Activated CD4-positive, alpha-beta T cell treated with anti-CD3 and anti-CD28 coated beads, Interleukin-2, amount 10 ng/mL, durations not matched to agents 24 days and 14 days (primary cell): ENCODE measurements at regions of chr11 and their contacts with region 1.

Region 1: DNA sequence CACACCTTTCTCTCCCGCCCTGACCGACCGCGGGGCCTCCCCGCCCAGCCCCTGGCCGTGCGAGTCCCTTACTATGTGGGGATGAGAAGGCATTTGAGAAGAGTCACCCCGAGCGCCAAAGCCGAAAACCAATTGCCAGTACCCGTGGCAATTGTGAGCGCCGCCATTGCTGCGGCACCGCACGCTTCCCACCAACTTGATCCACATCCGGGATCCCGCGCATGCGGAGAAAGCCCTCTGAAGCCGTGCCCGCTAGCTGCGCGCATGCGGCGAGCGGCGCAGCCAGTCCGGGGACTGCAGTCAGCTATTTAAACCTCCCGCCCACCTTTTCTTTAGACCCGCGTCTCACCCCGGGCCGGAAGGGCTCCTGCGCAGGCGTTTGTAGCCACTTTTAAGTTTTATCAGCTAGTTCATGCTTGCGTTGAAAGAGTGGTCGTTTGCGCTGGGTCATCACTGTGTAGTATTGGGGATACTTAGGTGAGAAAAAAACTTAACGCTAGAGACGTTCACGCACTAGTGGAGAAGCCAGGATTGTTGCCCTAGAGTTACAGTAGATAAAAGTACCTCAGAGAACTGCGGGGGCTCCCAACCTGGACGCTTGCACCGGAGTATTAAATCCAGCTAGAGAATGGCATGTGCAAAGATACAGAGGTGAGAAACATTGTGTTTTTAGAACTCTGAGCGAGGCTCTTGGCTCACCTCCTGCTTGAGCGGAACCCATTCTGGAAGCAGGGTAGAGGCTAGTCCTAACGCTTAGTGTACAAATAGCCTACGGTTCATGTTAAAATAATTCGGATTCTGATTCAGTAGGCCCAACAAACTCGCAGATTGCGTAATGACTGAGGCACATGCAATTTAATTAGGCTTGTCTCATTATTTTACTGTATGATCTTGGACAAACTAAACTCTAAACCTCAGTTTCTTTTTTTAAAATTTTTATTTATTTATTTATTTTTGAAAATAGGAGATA is at the start of gene ALG8:
- DNase-seq: peak; percentile 99
- H3K4me3 Mint-ChIP-seq: peak within 1 kb of the TSS; percentile 86
- H3K27ac Mint-ChIP-seq: peak within 1 kb of the TSS; percentile 95
- H3K4me1 Mint-ChIP-seq: peaks cover 43% of the 10 kb centered on the region
- H3K27me3 Mint-ChIP-seq: no peaks in the 10 kb centered on the region
- total RNA-seq, gene ALG8: 60.9 and 61.7 TPM in 2 replicates

Region 2: GRCh38 chr11:77820563-77821348 is 319.0 kb before region 1 on chr11 and contains the starts of genes AAMDC and RSF1:
- intact Hi-C with region 1: loop called (anchors 1 kb)
- DNase-seq: peak; percentile 98
- H3K4me3 Mint-ChIP-seq: peak within 1 kb of the TSS; percentile 98
- H3K27ac Mint-ChIP-seq: peak within 1 kb of the TSS; percentile 92
- H3K4me1 Mint-ChIP-seq: peaks cover 29% of the 10 kb centered on the region
- H3K27me3 Mint-ChIP-seq: no peaks in the 10 kb centered on the region
- total RNA-seq, gene AAMDC: 1.3 and 1.4 TPM in 2 replicates
- total RNA-seq, gene RSF1: 45.3 and 47.6 TPM in 2 replicates

Region 3: GRCh38 chr11:78079232-78080083 is 60.2 kb before region 1 on chr11 and contains the start of gene NDUFC2:
- intact Hi-C with region 1: loop called (anchors 1 kb)
- DNase-seq: peak; percentile 92
- H3K4me3 Mint-ChIP-seq: peak within 1 kb of the TSS; percentile 94
- H3K27ac Mint-ChIP-seq: peak within 1 kb of the TSS; percentile 91
- H3K4me1 Mint-ChIP-seq: peaks cover 51% of the 10 kb centered on the region
- H3K27me3 Mint-ChIP-seq: peaks cover 2% of the 10 kb centered on the region
- total RNA-seq, gene NDUFC2: 207 and 219 TPM in 2 replicates

Region 4: DNA sequence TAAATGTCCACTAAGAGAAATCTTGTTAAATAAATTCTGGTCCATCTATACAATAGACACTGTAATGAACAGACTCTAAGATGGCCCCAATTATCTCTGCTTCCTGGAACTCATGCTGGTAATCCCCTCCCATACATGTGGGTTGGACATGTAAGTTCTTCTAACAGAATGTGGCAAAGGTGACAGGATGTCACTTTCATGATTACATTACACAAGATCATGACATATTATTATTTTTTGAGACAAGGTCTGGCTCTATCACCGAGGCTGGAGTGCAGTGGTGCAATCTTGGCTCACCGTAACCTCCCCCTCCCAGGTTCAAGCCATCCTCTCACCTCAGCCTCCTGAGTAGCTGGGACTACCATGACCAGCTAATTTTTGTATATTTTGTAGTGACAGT is 45.5 kb before region 1 on chr11:
- intact Hi-C with region 1: loop called (anchors 5 kb)
- DNase-seq: peak; percentile 75
- H3K4me3 Mint-ChIP-seq: peak overlapping the region; percentile 12
- H3K27ac Mint-ChIP-seq: peak overlapping the region; percentile 87
- H3K4me1 Mint-ChIP-seq: peaks cover 10% of the 10 kb centered on the region
- H3K27me3 Mint-ChIP-seq: no peaks in the 10 kb centered on the region

Region 5: DNA sequence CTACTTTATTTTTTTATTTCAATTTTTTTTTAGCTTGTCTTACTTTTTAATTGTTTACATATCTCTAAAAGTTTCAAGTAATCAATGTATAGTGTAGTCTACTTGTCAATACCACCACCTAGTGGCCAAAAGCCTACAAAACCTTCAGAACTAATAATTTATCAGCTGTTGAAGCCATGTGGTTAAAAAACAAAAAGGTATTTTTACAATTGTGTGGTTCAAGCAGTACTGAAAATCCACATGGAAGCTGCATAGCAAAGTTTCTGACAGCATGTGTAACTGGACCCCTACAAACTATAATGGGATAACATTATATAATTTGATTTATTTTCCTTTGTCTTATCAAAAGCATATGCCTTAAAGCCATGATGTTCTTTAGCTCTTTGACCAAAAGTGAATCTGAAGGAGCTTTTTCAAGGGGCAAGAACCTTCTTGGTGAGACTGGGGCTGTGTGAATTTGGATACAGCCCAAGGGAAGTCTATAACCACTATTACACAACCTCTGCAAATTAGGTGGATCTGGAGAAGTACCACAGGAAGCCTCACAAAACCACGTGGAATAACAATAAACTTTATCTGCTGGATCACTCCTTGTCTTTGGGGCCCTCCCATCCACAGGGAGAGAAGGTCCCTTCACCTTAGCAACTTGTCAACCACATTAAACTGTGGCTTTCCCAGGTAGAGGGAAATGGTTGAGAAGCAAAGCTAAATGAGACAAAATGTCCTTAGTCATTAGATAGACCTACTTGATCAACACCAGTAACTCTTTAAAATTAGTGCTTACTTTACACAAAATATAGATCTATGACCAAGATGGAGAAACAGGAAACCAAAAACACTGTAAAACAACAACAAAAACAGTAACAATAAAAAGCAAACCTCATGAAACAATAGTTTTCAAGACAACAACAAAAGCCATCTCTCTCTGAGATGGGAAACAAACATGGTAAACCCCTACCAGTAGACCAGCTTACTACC is 425.1 kb after region 1 on chr11:
- intact Hi-C with region 1: loop called (anchors 1 kb)
- DNase-seq: peak; percentile 89
- H3K4me3 Mint-ChIP-seq: no peak overlapping the region
- H3K27ac Mint-ChIP-seq: peak overlapping the region; percentile 5
- H3K4me1 Mint-ChIP-seq: peaks cover 42% of the 10 kb centered on the region
- H3K27me3 Mint-ChIP-seq: no peaks in the 10 kb centered on the region